ENCODE measurements at regions of chr5 and their contacts with region 1.

Region 1: GRCh38 chr5:159209438-159210305 is at the start of gene RNF145:
- DNase-seq: peak; percentile 91
- H3K4me3 Mint-ChIP-seq: peak within 1 kb of the TSS; percentile 97
- H3K27ac Mint-ChIP-seq: peak within 1 kb of the TSS; percentile 97
- H3K4me1 Mint-ChIP-seq: peaks cover 42% of the 10 kb centered on the region
- H3K27me3 Mint-ChIP-seq: peaks cover 4% of the 10 kb centered on the region
- total RNA-seq, gene RNF145: 179 TPM in 2 replicates

Region 2: GRCh38 chr5:157858527-157859226 is 1351.0 kb before region 1 on chr5 and contains the start of gene CLINT1:
- intact Hi-C with region 1: loop called (anchors 1 kb)
- DNase-seq: peak; percentile 86
- H3K4me3 Mint-ChIP-seq: peak within 1 kb of the TSS; percentile 90
- H3K27ac Mint-ChIP-seq: peak within 1 kb of the TSS; percentile 92
- H3K4me1 Mint-ChIP-seq: peaks cover 71% of the 10 kb centered on the region
- H3K27me3 Mint-ChIP-seq: no peaks in the 10 kb centered on the region
- total RNA-seq, gene CLINT1: 90.5 and 93.1 TPM in 2 replicates

Region 3: DNA sequence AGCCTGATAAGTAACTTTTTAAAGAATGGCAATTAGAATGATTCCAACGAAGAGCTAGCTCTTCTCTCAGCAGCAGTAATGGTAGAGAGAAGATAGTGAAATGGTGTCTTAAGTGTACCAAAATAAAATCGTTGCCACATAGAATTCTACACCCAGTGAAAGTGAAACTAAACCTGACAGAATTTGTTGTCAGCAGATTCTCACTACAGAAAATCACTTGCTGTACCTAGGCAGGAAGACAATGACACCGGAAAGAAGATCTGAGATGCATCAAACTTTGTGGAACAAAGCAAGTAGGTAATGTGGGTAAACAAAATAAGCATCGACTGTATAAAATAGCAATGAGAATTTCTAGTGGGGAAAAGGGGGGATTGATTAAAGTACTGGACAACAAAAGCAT is 89.2 kb before region 1 on chr5:
- intact Hi-C with region 1: no loop called
- DNase-seq: no peak
- H3K4me3 Mint-ChIP-seq: peak overlapping the region; percentile 43
- H3K27ac Mint-ChIP-seq: peak overlapping the region; percentile 86
- H3K4me1 Mint-ChIP-seq: peaks cover 18% of the 10 kb centered on the region
- H3K27me3 Mint-ChIP-seq: peaks cover 10% of the 10 kb centered on the region

Region 4: DNA sequence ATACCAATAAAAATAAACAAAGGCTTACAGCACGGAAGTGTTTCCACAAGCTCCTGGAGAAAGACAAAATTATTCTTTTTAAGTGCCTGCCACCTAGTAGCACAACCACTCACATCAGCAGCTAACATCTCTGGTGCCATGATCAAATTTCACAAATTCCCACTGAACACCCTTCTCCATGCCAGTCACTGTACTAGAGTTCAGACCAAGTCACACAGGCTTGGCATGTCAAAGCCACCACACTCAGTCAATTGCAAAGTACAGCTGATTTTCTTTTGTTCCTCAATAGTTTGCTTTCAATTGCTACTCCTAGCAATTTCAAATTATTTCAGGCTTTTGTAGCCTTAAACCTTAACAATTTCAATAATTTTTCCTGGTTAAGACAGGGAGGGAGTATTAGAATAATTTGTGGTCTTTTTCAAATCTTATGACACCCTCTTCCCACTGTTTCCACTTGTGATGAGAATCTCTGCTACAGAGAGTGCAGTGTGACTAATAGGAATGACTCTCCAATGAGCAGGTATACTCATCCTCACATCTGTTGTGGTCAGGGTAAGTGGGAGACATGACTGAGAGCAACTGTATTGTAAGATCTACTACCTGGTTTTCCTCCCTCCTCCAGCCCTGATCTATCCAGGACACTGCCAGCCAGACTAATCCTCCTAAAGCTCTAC is 46.5 kb before region 1 on chr5:
- intact Hi-C with region 1: loop called (anchors 1 kb)
- DNase-seq: no peak
- H3K4me3 Mint-ChIP-seq: peak overlapping the region; percentile 16
- H3K27ac Mint-ChIP-seq: peak overlapping the region; percentile 64
- H3K4me1 Mint-ChIP-seq: peaks cover 53% of the 10 kb centered on the region
- H3K27me3 Mint-ChIP-seq: no peaks in the 10 kb centered on the region

Region 5: DNA sequence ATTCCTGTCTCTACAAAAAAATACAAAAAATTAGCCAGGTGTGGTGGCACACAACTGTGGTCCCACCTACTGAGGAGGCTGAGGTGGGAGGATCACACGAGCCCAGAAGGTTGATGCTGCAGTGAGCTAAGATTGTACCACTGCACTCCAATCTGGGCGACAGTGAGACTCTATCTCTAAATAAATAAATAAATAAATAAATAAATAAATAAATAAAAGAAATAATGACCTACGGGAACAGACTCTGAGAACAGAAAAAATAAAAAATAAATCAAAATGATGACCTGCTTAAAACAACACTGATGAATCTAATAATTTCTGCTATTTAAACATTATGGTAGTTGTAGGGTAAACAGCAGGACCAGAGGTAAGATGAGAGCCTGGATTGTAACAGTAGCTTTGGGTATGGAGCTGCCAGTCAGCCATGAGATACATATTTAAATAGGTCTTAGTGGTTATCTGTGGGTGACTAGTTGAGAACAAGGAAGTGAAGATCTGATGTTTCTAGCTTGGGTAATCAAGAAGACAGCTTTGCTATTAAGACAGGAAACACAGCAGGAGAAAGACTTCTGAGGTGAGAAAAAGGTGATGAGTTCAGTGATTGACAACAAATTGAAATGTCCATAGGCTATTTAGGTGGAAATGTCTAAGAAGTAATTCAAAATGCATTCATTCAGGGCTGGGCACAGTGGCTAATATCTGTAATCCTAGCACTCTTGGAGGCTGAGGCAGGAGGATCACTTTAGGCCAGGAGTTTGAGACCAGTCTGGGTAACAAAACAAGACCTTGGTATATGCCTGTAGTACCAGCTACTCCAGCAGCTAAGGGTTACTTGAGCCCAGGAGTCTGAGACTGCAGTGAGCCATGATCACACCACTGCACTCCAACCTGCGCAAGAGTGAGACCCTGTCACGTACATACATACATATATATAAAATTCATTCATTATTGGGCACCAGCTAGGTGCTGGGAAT is 11.3 kb before region 1 on chr5:
- intact Hi-C with region 1: loop called (anchors 1 kb)
- DNase-seq: no peak
- H3K4me3 Mint-ChIP-seq: no peak overlapping the region
- H3K27ac Mint-ChIP-seq: peak overlapping the region; percentile 20
- H3K4me1 Mint-ChIP-seq: peaks cover 60% of the 10 kb centered on the region
- H3K27me3 Mint-ChIP-seq: no peaks in the 10 kb centered on the region

Region 6: GRCh38 chr5:159249158-159249557 is 39.5 kb after region 1 on chr5:
- intact Hi-C with region 1: no loop called
- DNase-seq: no peak
- H3K4me3 Mint-ChIP-seq: no peak overlapping the region
- H3K27ac Mint-ChIP-seq: no peak overlapping the region
- H3K4me1 Mint-ChIP-seq: no peaks in the 10 kb centered on the region
- H3K27me3 Mint-ChIP-seq: peaks cover 8% of the 10 kb centered on the region

Region 7: GRCh38 chr5:159336991-159337955 is 127.6 kb after region 1 on chr5:
- intact Hi-C with region 1: loop called (anchors 2 kb)
- DNase-seq: peak; percentile 66
- H3K4me3 Mint-ChIP-seq: peak overlapping the region; percentile 43
- H3K27ac Mint-ChIP-seq: peak overlapping the region; percentile 50
- H3K4me1 Mint-ChIP-seq: peaks cover 87% of the 10 kb centered on the region
- H3K27me3 Mint-ChIP-seq: no peaks in the 10 kb centered on the region

Region 8: GRCh38 chr5:159773062-159773924 is 563.6 kb after region 1 on chr5:
- intact Hi-C with region 1: loop called (anchors 5 kb)
- DNase-seq: peak; percentile 79
- H3K4me3 Mint-ChIP-seq: peak overlapping the region; percentile 49
- H3K27ac Mint-ChIP-seq: peak overlapping the region; percentile 44
- H3K4me1 Mint-ChIP-seq: peaks cover 33% of the 10 kb centered on the region
- H3K27me3 Mint-ChIP-seq: peaks cover 29% of the 10 kb centered on the region

Region 9: GRCh38 chr5:160418561-160419457 is 1209.1 kb after region 1 on chr5 and contains the start of gene SLU7:
- intact Hi-C with region 1: loop called (anchors 5 kb)
- DNase-seq: peak; percentile 91
- H3K4me3 Mint-ChIP-seq: peak within 1 kb of the TSS; percentile 94
- H3K27ac Mint-ChIP-seq: peak within 1 kb of the TSS; percentile 95
- H3K4me1 Mint-ChIP-seq: peaks cover 77% of the 10 kb centered on the region
- H3K27me3 Mint-ChIP-seq: no peaks in the 10 kb centered on the region
- total RNA-seq, gene SLU7: 37.4 and 47.4 TPM in 2 replicates

Measured in activated T-helper 1 cell treated with anti-CD3 and anti-CD28 coated beads, Interleukin-12 subunit alpha, Interleukin-12 subunit beta, Interleukin-2, Interleukin-4 antibody, amounts not matched to agents 30 ng/mL and 10 ng/mL and 1 ng/mL, durations not matched to agents 14 hours and 24 hours and 36 hours (primary cell).